GM10248 (cell line): ENCODE measurements at regions of chr18 and their contacts with region 1.

Region 1: DNA sequence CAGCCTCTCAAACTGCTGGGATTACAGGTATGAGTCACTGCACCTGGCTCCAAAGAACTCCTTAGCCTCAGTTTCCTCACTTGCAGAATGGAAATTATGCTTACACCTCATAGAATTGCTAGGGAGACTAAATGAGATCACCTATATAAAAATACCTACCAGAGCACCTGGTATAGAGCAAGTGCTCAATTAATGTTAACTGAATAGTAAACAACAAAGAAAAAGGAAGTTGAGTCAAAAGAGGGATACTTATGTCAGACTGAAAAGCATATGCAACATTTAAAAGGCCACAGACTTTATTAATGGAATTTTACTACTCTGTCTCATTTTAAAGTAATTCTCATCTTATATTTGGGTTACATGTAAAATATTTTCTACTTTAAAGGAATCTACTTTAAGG is 138.3 kb upstream of the SMAD7 start:
- DNase-seq: no peak
- CTCF ChIP-seq: no peak

Region 2: DNA sequence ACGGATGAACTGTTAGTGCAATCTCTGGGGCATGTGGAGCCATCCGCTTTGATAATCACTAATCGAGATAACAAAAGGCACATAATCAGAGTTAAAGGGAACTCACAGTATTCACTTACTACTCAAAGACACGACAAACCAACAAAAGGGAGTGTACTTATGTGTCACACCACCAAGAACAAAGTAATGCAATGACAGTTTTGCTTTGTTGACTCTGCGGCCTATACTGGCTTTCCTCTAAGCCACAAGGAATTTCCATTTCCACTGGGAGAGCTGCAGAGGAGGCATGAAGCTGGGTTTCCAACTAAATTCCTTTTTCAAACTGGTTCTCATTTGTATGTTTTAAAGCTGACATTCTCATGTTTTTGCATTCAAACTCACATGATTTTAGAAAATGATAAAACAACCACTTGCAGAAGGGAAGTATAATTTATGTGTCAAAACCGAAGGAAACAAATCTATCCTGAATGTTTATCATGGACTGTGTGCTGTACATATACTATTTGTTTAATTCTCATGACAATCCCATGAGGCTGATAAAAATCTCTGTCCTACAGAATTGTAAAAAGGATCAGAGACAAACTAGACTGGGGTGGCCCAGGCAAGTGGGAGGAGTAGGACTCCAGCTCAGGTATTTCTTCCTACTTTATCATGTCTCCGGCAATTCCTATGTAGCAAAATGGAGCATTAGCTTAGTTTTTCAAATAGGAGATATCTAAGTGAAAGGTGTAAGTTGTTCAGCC is 11.3 kb after region 1 on chr18:
- CTCF ChIA-PET with region 1: interaction called, 10 read pairs
- POLR2A ChIA-PET with region 1: no interaction called
- DNase-seq: no peak
- CTCF ChIP-seq: no peak